Activated CD8-positive, alpha-beta memory T cell treated with anti-CD3 and anti-CD28 coated beads, Interleukin-2, amount 10 ng/mL, durations not matched to agents 7 days and 5 days (primary cell): ENCODE measurements at regions of chr11 and their contacts with region 1.

Region 1: DNA sequence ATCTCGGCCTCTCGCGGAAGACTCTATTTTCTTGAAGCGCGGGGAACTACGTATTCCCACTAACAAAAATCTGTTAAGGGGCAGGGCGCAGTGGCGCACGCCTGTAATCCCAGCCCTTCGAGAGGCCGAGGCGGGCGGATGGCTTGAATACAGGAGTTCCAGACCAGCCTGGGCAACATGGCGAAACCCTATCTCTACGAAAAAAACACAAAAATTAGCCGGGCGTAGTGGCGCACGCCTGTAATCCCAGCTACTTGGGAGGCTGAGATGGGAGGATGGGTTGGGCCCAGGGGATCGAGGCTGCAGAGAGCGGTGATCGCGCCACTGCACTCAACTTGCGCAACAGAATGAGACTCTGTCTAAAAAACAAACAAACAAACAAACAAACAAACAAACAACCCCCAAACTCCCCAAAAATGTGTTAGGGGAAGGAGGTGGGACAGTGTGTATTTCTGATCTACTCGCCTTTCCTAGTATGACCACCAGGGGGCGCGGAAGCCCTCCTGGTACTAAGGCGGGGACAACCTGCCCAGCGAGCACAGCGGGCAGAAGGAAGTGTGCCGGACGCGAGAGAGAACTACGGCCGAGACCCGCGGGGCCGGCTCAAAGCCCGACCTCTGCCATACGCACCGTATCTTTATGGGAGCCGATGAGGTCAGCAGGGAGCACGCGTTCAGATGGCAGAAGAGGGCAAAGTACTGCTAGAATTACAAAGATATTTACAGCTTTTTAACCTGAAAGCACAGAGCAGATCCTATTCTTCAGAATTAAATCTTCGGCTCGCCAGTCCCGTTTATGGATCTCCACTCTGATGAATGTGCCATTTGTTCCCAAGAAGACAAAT is 1.3 kb upstream of the STX3 start:
- DNase-seq: peak; percentile 92
- ATAC-seq: peak; percentile 77
- H3K4me3 Mint-ChIP-seq: peak overlapping the region; percentile 89
- H3K27ac Mint-ChIP-seq: peak overlapping the region; percentile 84
- H3K4me1 Mint-ChIP-seq: peaks cover 31% of the 10 kb centered on the region
- H3K27me3 Mint-ChIP-seq: peaks cover 9% of the 10 kb centered on the region

Region 2: DNA sequence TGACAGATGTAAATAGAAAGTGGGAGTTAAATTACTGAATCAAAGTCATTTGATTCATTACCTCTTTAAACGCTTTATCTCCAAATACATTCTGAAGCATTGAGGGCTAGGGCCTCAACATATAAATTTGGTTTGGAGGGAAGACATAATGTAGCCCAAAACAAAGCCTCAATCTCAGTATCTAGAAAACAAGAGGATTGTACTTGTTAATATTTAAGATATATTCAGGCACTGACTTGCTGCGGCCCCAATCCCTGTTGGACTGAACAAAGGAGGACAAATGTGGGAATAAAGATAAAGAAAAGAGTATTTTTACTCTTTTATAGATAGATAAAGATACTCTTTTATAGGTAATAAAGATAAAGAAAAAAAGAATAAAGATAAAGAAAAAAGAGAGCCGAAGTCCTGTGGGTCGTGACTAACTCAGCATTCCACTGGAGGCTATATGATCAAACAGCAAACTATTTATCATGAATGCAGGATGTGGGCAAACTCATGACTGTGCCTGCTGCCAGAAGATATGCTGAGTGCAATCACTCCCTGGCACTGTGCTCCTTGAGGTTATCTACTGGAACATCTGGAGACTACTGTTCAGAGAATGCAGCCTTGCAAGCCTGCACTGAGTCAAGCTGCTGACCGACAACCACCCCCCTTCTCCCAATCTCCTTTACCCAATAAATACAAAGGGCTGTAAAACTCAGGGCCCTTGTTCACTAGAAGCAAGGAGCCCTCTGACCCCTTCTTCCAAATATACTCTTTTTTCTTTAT is 47.2 kb before region 1 on chr11:
- CTCF ChIA-PET with region 1: no interaction called
- DNase-seq: no peak
- ATAC-seq: no peak
- H3K4me3 Mint-ChIP-seq: no peak overlapping the region
- H3K27ac Mint-ChIP-seq: no peak overlapping the region
- H3K4me1 Mint-ChIP-seq: no peaks in the 10 kb centered on the region
- H3K27me3 Mint-ChIP-seq: peaks cover 24% of the 10 kb centered on the region

Region 3: GRCh38 chr11:59767225-59767611 is 13.3 kb after region 1 on chr11:
- CTCF ChIA-PET with region 1: interaction called, 57 read pairs
- DNase-seq: peak; percentile 79
- ATAC-seq: peak; percentile 78
- H3K4me3 Mint-ChIP-seq: no peak overlapping the region
- H3K27ac Mint-ChIP-seq: no peak overlapping the region
- H3K4me1 Mint-ChIP-seq: peaks cover 36% of the 10 kb centered on the region
- H3K27me3 Mint-ChIP-seq: no peaks in the 10 kb centered on the region

Region 4: GRCh38 chr11:59787816-59788215 is 33.9 kb after region 1 on chr11:
- CTCF ChIA-PET with region 1: interaction called, 21 read pairs
- DNase-seq: no peak
- ATAC-seq: no peak
- H3K4me3 Mint-ChIP-seq: no peak overlapping the region
- H3K27ac Mint-ChIP-seq: peak overlapping the region; percentile 1
- H3K4me1 Mint-ChIP-seq: peaks cover 52% of the 10 kb centered on the region
- H3K27me3 Mint-ChIP-seq: no peaks in the 10 kb centered on the region

Region 5: DNA sequence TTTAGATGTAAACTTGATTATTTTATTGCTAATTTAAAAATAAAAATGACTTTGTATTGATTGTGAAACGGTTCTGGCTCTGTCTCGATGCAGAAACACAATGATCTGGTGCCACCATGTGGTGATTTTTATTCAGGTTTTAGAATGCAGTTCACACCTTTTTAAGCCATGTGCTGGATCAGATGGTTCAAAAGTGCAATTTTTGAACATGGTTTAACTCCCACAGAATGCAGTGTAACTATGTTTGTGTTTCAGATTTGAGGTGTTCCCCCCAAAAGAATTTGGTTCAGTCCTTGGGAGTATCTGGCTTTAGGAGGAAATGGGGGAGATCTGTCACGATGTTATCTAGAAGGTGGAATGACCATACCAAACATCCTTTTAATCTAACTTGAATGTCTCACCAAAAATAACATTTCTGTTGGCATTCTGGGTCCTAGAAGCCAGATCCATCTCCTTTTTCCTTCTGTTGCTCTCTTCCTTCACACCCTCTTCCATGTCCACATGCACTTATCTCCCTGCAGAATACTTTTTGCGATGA is 48.8 kb after region 1 on chr11:
- CTCF ChIA-PET with region 1: interaction called, 104 read pairs
- DNase-seq: peak; percentile 54
- ATAC-seq: peak; percentile 88
- H3K4me3 Mint-ChIP-seq: no peak overlapping the region
- H3K27ac Mint-ChIP-seq: no peak overlapping the region
- H3K4me1 Mint-ChIP-seq: peaks cover 21% of the 10 kb centered on the region
- H3K27me3 Mint-ChIP-seq: no peaks in the 10 kb centered on the region

Region 6: GRCh38 chr11:59810189-59810910 is 56.5 kb after region 1 on chr11 and contains the start of gene MRPL16:
- CTCF ChIA-PET with region 1: interaction called, 50 read pairs
- DNase-seq: peak; percentile 95
- ATAC-seq: peak; percentile 99
- H3K4me3 Mint-ChIP-seq: peak within 1 kb of the TSS; percentile 91
- H3K27ac Mint-ChIP-seq: peak within 1 kb of the TSS; percentile 91
- H3K4me1 Mint-ChIP-seq: peaks cover 34% of the 10 kb centered on the region
- H3K27me3 Mint-ChIP-seq: no peaks in the 10 kb centered on the region
- total RNA-seq, gene MRPL16: 76.5 to 102 TPM